ENCODE measurements at regions of chrX and their contacts with region 1.

Region 1: DNA sequence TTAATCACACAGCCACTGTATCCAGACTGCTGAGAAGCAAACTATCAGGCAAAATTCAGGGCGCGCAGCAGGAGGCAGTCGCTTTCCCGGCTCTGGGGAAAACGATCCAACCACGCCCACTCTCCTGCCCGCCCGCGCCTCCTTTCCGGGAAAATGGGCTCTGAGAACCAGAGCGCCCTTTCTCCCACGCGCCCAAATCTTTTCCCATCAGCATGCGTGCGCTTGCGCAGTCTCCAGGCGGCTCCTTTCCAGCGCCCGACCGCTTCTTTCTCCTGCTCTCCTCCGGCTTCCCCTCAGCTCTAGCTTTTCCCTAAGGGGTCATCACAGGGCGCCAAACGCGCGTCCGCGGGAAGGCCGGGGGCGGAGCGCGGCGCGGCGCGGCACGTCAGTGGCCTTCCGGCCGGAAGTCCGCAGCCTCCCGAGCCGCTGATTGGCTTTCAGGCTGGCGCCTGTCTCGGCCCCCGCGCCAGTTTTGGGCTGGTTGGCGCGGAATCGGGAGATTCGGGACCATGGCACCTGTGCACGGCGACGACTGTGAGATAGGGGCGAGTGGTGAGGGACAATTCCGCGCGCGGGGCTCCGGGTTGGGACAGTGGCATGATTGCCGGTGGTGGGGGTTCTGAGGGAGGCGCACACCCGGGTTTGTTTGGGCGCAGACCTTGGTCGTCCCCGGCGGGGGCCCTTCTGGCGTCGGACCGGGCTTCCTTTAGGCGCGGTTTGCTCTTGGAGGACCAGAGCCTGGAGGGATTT is at the start of gene POLA1:
- DNase-seq: peak; percentile 4 to 80 (median 51)
- ATAC-seq: peak; percentile 84
- H3K4me3 ChIP-seq: peak within 1 kb of the TSS; percentile 76 to 77
- H3K4me3 Mint-ChIP-seq: peak within 1 kb of the TSS; percentile 90
- H3K27ac ChIP-seq: peak within 1 kb of the TSS; percentile 40 to 66
- H3K27ac Mint-ChIP-seq: peak within 1 kb of the TSS; percentile 82
- H3K4me1 ChIP-seq: peaks cover 9% of the 10 kb centered on the region
- H3K4me1 Mint-ChIP-seq: peaks cover 24% of the 10 kb centered on the region
- H3K27me3 ChIP-seq: no peaks in the 10 kb centered on the region
- H3K27me3 Mint-ChIP-seq: no peaks in the 10 kb centered on the region
- CTCF ChIP-seq: no peak
- total RNA-seq, gene POLA1: 3.4 to 3.8 TPM

Region 2: GRCh38 chrX:24506055-24506454 is 187.6 kb before region 1 on chrX:
- CTCF ChIA-PET with region 1: no interaction called
- POLR2A ChIA-PET with region 1: no interaction called
- intact Hi-C with region 1: loop called in 1 of 2 experiments (anchors 10 kb)
- DNase-seq: no peak
- ATAC-seq: no peak
- H3K4me3 ChIP-seq: no peak overlapping the region
- H3K4me3 Mint-ChIP-seq: no peak overlapping the region
- H3K27ac ChIP-seq: no peak overlapping the region
- H3K27ac Mint-ChIP-seq: no peak overlapping the region
- H3K4me1 ChIP-seq: no peaks in the 10 kb centered on the region
- H3K4me1 Mint-ChIP-seq: peaks cover 5% of the 10 kb centered on the region
- H3K27me3 ChIP-seq: no peaks in the 10 kb centered on the region
- H3K27me3 Mint-ChIP-seq: no peaks in the 10 kb centered on the region
- CTCF ChIP-seq: no peak

Region 3: DNA sequence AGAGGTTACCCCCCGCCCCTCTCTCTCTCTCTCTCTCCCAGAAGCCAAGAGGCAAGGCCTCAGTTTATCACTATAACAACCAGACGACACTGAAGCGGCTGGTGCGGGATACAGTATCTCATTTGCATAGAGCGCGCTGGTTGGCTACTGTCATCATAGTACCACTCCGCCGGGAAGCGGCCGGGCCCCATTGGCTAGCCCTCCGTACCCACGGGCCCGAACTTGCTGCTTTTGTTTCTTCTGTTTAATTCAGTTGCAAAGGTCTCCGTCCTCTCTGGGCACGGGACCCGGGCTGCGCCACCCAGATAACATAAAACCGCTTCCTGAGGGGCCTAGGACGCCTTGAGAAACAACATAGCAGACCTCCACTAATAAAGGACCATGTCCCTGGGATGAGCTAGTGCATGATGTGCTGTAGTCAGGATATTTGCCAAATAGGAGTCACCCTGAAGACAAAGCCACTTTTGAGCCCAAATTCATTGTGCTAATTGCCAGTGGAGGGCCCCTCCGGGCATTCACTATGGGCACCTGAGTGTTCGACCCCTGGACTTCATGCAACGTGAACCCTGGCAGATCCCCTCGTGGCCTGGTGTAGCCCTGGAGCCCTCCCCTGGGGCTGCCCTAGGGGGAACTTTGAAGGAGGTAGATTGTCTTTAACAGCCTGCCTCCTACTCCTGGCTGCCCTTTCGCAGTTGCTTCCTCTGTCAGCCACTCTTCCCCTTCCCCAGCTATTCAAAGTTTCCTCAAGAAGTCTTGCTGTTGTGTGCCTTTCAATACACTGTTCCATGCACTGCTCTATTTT is 46.2 kb before region 1 on chrX and contains the start of gene PCYT1B:
- CTCF ChIA-PET with region 1: no interaction called
- POLR2A ChIA-PET with region 1: no interaction called
- intact Hi-C with region 1: loop called in 1 of 2 experiments (anchors 5 kb)
- DNase-seq: peak; percentile 1 to 72 (median 52)
- ATAC-seq: peak; percentile 99
- H3K4me3 ChIP-seq: peak within 1 kb of the TSS; percentile 19 to 33
- H3K4me3 Mint-ChIP-seq: peak within 1 kb of the TSS; percentile 80
- H3K27ac ChIP-seq: no peak within 1 kb of the TSS
- H3K27ac Mint-ChIP-seq: no peak within 1 kb of the TSS
- H3K4me1 ChIP-seq: peaks cover 12% of the 10 kb centered on the region
- H3K4me1 Mint-ChIP-seq: peaks cover 21% of the 10 kb centered on the region
- H3K27me3 ChIP-seq: no peaks in the 10 kb centered on the region
- H3K27me3 Mint-ChIP-seq: peaks cover 11% of the 10 kb centered on the region
- CTCF ChIP-seq: no peak
- total RNA-seq, gene PCYT1B: not detected

Region 4: GRCh38 chrX:24796204-24796603 is 102.6 kb after region 1 on chrX:
- CTCF ChIA-PET with region 1: no interaction called
- POLR2A ChIA-PET with region 1: no interaction called
- intact Hi-C with region 1: no loop called
- DNase-seq: no peak
- ATAC-seq: no peak
- H3K4me3 ChIP-seq: no peak overlapping the region
- H3K4me3 Mint-ChIP-seq: no peak overlapping the region
- H3K27ac ChIP-seq: no peak overlapping the region
- H3K27ac Mint-ChIP-seq: no peak overlapping the region
- H3K4me1 ChIP-seq: no peaks in the 10 kb centered on the region
- H3K4me1 Mint-ChIP-seq: no peaks in the 10 kb centered on the region
- H3K27me3 ChIP-seq: no peaks in the 10 kb centered on the region
- H3K27me3 Mint-ChIP-seq: no peaks in the 10 kb centered on the region
- CTCF ChIP-seq: no peak

Region 5: DNA sequence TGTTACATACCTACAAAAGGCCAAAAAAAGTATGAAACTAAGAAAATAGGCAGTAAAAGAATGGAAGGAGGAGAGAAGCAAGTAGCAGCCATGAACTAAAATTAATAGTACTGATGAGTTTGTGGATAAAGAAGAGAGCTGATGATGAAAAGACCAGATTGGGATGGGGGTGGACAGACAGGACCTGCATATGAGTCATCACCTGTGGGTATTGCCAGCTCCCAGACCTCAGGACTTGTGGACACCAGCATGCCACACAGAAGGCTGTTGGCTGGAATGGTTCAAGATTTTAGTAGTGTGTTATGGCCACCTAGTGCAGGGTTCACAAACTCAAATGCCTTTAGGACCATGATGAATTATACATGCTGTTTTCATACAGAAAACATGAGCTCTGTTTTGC is 263.2 kb after region 1 on chrX:
- CTCF ChIA-PET with region 1: no interaction called
- POLR2A ChIA-PET with region 1: no interaction called
- intact Hi-C with region 1: no loop called
- DNase-seq: no peak
- ATAC-seq: no peak
- H3K4me3 ChIP-seq: no peak overlapping the region
- H3K4me3 Mint-ChIP-seq: no peak overlapping the region
- H3K27ac ChIP-seq: no peak overlapping the region
- H3K27ac Mint-ChIP-seq: no peak overlapping the region
- H3K4me1 ChIP-seq: no peaks in the 10 kb centered on the region
- H3K4me1 Mint-ChIP-seq: no peaks in the 10 kb centered on the region
- H3K27me3 ChIP-seq: no peaks in the 10 kb centered on the region
- H3K27me3 Mint-ChIP-seq: no peaks in the 10 kb centered on the region
- CTCF ChIP-seq: no peak

Measured in CD8-positive, alpha-beta T cell (primary cell).